ENCODE measurements at regions of chr14 and their contacts with region 1.

Region 1: DNA sequence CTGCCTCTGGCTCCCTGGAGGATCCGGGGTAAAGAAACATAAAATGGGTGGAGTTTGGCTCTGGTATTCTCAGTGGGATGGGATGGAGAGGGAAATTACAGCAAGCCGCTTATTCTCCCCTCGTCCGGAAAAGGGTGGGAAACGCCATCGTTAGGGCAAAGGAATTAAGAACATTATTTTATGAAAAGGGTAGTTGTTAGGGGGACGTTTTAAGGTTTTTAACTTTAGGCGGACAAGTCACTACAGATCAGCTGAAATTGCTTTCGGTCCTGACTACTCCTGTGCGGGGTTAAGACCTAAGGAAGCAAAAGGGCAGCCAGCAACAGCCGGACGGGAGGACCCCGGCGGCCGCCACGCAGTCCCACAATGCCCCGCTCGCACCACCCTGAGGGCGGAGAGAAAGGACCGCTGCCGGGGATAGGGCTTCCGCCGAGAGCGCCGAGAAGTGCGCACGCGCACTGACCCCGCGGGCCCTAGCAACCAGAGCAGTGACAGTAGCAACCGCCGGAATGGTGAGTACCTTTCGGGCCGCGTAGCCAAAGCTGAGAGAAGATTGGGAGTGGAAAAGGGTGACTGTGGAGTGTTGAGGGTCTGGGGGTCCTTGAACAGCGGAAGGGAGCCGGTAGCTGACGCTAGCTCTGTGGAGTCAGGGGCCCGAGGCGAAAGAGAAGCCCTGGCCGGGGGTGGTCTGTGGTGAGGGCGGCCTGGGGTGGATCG is at the start of gene DNAL1:
- DNase-seq: peak; percentile 97
- total RNA-seq, gene DNAL1: 17.1 TPM

Region 2: GRCh38 chr14:73713803-73714655 is 69.3 kb after region 1 on chr14 and contains the start of gene PNMA1:
- intact Hi-C with region 1: loop called (anchors 5 kb)
- DNase-seq: peak; percentile 94
- total RNA-seq, gene PNMA1: 45.9 TPM

Region 3: GRCh38 chr14:73723797-73724661 is 79.3 kb after region 1 on chr14:
- intact Hi-C with region 1: no loop called
- DNase-seq: peak; percentile 81

Region 4: DNA sequence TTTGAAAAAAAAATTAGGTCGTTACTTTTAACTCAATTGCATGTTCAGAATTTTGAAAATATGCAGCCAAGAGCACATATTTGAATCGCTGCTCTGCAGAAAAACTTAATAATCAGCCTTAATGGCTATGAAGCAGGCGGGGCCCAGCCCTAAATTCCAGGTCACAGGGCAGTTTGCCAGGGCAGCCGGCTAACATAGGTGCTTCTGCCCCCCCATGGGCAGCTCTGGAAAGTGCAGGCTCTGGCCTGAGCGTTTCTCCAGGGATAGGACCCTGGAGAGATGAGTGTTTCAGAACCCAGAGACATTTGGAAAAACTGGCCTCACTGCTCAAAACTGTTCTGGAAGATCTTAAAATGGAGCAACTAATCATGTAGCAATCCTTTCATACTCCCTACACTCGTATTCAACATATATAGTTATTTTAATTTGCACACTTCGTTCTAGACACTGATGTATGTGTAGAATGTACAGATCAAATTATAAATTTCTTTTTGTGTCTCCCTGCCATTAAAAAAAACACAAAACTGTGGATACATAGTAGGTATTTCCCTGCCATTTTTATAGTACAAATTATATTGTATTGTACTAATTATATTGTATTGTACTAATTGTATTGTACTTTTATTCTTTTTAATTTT is 181.0 kb after region 1 on chr14:
- intact Hi-C with region 1: loop called (anchors 10 kb)
- DNase-seq: peak; percentile 94